K562 (cell line): ENCODE measurements at regions of chr20 and their contacts with region 1.

Region 1: GRCh38 chr20:50713657-50714101 is 17.7 kb upstream of the PARD6B start:
- DNase-seq: peak in 2 of 4 experiments; percentile 56 to 75
- ATAC-seq: peak; percentile 82
- H3K4me3 ChIP-seq: no peak overlapping the region
- H3K27ac ChIP-seq: no peak overlapping the region
- H3K4me1 ChIP-seq: peaks cover 15 to 22% of the 10 kb centered on the region in 2 experiments
- H3K27me3 ChIP-seq: no peaks in the 10 kb centered on the region
- CTCF ChIP-seq: peak; percentile 69 to 78 (median 69)
- EP300 ChIP-seq: peak; percentile 58
- POLR2A ChIP-seq: no peak
- RAD21 ChIP-seq: peak; percentile 75 to 86

Region 2: DNA sequence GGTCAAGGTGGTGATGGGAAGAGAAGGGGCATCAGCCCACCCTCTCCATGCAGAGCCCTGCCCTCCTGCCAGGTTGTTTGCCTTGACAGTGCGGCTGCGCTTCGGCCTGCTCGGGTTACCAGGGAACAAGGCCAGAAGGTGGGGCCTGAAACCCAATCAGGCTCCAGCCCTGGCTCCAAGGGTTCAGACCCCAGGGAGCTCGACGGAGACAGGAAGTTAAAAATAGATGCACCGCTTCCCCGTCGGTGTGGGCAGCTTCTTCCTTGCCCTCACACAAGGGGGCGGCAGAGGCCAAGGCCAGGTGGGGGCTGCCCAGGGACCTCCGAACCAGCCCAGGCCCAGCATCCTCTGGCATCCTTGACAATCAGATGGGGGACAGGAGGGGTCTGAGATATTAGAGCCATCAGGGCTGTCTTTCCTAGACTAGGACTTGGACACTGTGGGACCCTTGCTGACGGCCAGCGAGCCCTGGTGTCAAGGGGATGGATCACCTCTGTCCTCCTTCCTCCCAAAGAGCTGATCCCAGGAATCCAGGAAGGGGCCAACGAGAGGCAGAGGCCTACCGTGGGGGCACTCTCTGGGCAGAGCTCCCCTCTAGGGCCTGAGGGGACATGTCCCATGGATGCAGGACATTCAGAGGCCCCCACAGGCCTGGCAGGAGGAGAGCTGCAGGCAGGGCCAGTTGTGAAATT is 87.5 kb before region 1 on chr20:
- CTCF ChIA-PET with region 1: interaction called, 3 read pairs
- POLR2A ChIA-PET with region 1: no interaction called
- in situ Hi-C with region 1: no loop called
- intact Hi-C with region 1: loop called (anchors 1 kb)
- DNase-seq: peak; percentile 68 to 78 (median 73)
- ATAC-seq: peak; percentile 91
- H3K4me3 ChIP-seq: no peak overlapping the region
- H3K27ac ChIP-seq: no peak overlapping the region
- H3K4me1 ChIP-seq: peaks cover 0 to 31% of the 10 kb centered on the region in 2 experiments; a peak in 3 of 5 replicates
- H3K27me3 ChIP-seq: no peaks in the 10 kb centered on the region
- CTCF ChIP-seq: peak; percentile 83 to 87 (median 83)
- EP300 ChIP-seq: no peak
- POLR2A ChIP-seq: no peak
- RAD21 ChIP-seq: peak; percentile 78 to 95

Region 3: DNA sequence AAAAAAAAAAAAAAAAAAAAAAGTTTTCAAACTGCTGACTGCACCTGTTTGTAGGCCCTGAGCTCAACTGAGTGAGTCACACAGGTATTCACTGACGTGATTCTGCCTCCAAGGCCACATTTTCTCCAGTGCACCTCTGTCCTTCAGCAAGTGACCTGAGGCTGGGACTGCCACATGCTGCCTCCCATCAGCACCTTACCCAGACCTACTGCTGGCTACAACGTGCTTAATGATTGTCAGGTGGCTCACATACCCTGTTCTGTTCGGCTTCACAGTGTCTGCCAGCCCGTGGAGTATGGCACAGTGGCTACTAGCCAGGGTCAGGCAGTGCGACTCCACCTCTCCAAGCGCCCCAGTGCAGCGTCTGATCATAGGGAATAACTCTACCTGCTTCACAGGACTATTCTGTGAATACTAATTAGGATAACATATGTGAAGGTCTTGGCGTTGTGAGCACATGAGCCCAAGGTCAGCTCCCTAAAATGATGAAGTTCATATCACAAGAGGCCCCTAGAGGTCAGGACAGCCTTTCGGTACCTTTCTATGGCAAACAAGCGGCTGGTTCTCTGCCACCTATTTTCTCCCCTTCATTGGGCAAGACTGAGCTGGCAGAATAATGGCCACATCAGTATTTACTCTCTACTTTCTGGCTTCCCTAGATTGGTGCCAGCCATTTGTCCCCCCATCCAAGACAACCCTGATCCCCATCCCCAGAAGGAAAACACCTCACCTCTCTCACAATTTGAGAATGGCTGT is 50.4 kb before region 1 on chr20:
- CTCF ChIA-PET with region 1: interaction called, 3 read pairs
- POLR2A ChIA-PET with region 1: interaction called, 3 read pairs
- in situ Hi-C with region 1: no loop called
- intact Hi-C with region 1: loop called (anchors 5 kb)
- DNase-seq: peak in 1 of 4 experiments; percentile 40
- ATAC-seq: peak; percentile 40
- H3K4me3 ChIP-seq: no peak overlapping the region
- H3K27ac ChIP-seq: no peak overlapping the region
- H3K4me1 ChIP-seq: peaks cover 47 to 53% of the 10 kb centered on the region in 2 experiments
- H3K27me3 ChIP-seq: no peaks in the 10 kb centered on the region
- CTCF ChIP-seq: peak; percentile 41 to 56 (median 47); a peak in 4 of 6 replicates
- EP300 ChIP-seq: no peak
- POLR2A ChIP-seq: no peak
- RAD21 ChIP-seq: peak; percentile 53 to 70